ENCODE measurements at regions of chr12 and their contacts with region 1.

Region 1: GRCh38 chr12:30813525-30814294 is 59.0 kb upstream of the CAPRIN2 start:
- DNase-seq: peak; percentile 36
- H3K4me3 Mint-ChIP-seq: no peak overlapping the region
- H3K27ac Mint-ChIP-seq: no peak overlapping the region
- H3K4me1 Mint-ChIP-seq: peaks cover 4% of the 10 kb centered on the region
- H3K27me3 Mint-ChIP-seq: peaks cover 22% of the 10 kb centered on the region

Region 2: DNA sequence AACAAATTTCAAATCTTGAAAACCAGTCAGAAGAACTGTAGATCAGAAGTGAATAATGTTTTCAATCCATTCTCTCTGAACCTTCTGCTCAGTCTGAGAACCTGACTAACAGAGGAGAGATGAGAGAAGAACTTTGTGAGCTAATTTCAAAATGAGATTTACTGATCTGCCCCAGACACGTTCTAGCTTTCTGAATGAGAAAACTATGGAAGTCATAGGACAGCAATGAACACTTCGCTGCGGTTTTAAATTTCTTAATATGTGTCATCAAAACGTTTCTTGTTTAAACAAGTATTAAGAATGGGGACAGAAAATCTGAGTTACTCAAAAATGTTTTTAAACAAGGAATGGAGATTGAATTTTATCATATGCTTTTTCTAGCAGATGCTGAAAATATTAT is 1731.2 kb before region 1 on chr12:
- CTCF ChIA-PET with region 1: no interaction called
- intact Hi-C with region 1: loop called (anchors 5 kb)
- DNase-seq: no peak
- H3K4me3 Mint-ChIP-seq: no peak overlapping the region
- H3K27ac Mint-ChIP-seq: no peak overlapping the region
- H3K4me1 Mint-ChIP-seq: peaks cover 7% of the 10 kb centered on the region
- H3K27me3 Mint-ChIP-seq: peaks cover 9% of the 10 kb centered on the region

Region 3: DNA sequence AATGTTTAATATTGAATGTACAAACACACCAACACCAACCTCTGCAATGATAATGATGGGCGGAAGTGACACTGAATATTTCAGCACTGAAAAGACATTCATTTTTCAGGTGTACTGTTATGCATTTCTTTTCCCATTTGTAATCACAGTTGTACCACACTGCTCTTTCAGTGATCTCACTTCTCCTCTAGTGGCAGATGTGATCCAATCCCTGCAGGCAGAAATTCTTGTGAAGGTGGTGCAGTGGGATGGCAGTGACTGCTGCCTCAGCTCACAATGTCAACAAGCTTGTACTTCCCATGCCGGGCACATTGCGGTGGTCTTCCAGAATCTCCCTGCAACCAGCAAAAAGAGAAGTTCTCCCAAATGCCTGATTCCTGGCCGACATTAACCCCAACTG is 1409.7 kb before region 1 on chr12:
- CTCF ChIA-PET with region 1: no interaction called
- intact Hi-C with region 1: no loop called
- DNase-seq: no peak
- H3K4me3 Mint-ChIP-seq: no peak overlapping the region
- H3K27ac Mint-ChIP-seq: no peak overlapping the region
- H3K4me1 Mint-ChIP-seq: no peaks in the 10 kb centered on the region
- H3K27me3 Mint-ChIP-seq: peaks cover 4% of the 10 kb centered on the region